ENCODE measurements at regions of chr2 and their contacts with region 1.

Region 1: GRCh38 chr2:121076885-121077549 is 208.0 kb downstream of the TFCP2L1 start:
- DNase-seq: peak; percentile 68 to 86
- H3K4me3 ChIP-seq: peak overlapping the region; percentile 27; the same call in 1 of the 2 replicates
- H3K27ac ChIP-seq: no peak overlapping the region
- H3K4me1 ChIP-seq: peaks cover 16% of the 10 kb centered on the region; the same call in 1 of the 2 replicates
- H3K27me3 ChIP-seq: 0 out of 2 replicates have a peak, but pooled peaks cover 5% of the 10 kb centered on the region
- CTCF ChIP-seq: peak; percentile 100

Region 2: DNA sequence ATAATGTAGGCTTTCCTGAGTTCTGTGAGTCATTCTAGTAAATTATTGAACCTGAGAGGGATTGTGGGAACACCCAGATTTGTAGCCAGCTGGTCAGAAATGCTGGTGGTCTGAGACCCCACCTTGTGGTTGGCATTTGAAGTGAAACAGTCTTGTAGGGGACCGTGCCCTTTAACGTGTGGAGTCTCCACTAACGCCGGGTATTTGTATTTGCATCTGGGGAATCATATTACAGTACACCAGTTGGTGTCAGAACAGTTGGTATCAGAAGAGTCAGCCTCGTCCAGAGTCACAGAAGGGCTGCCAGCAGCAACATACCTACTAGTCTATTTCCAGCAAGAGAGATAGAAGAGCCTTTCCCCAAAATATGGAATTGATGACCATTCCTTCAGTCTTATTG is 1355.6 kb before region 1 on chr2:
- CTCF ChIA-PET with region 1: no interaction called
- POLR2A ChIA-PET with region 1: interaction called, 13 read pairs
- intact Hi-C with region 1: no loop called
- DNase-seq: peak in 1 of 2 experiments; percentile 16
- H3K4me3 ChIP-seq: no peak overlapping the region
- H3K27ac ChIP-seq: no peak overlapping the region
- H3K4me1 ChIP-seq: peaks cover 4% of the 10 kb centered on the region; the same call in 1 of the 2 replicates
- H3K27me3 ChIP-seq: peaks cover 2% of the 10 kb centered on the region; the same call in 1 of the 2 replicates
- CTCF ChIP-seq: no peak

Region 3: GRCh38 chr2:120343433-120344105 is 733.4 kb before region 1 on chr2:
- CTCF ChIA-PET with region 1: no interaction called
- POLR2A ChIA-PET with region 1: no interaction called
- intact Hi-C with region 1: loop called (anchors 5 kb)
- DNase-seq: peak; percentile 80 to 87
- H3K4me3 ChIP-seq: peak overlapping the region; percentile 77; the same call in 1 of the 2 replicates
- H3K27ac ChIP-seq: no peak overlapping the region
- H3K4me1 ChIP-seq: peaks cover 21% of the 10 kb centered on the region
- H3K27me3 ChIP-seq: 0 out of 2 replicates have a peak, but pooled peaks cover 7% of the 10 kb centered on the region
- CTCF ChIP-seq: peak; percentile 96

Region 4: DNA sequence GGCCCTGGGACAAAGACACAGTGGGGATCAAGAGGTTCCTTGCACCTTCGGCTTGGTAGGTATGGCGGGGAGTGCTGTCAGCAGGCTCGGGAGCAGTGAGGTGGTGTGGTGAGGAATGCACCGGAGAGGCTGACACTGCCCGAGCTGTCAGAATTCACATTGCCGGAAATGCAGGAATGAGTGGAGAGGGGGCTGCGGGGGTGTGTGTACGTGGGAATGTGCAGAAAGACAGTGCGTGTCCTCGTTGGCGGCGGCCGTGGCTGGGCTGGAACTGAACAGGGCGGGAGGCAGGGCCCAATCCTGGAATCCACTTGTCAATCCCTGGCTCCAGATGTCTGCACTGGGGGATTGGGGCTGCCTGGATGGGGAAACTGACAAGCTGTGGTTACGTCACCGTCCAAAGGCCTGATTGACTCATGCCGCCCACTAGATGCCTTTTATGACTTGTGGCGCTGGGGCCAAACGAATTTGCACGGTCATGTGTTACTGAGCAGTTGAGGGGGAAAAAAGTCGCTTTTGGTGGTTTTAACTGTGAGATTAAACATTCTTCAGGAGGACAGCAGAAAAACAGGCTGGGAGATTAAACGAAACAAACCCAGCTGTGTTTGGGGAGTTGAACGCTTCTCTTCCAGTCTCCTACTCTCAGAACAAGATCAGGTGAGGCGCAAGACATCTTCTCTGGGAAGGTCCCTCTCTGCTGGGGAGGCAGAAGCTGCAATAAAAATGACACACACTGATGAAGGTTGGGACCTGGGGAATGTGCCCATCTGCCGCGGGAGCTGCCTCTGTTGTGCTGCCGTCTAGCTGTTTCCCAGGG is 530.8 kb before region 1 on chr2:
- CTCF ChIA-PET with region 1: no interaction called
- POLR2A ChIA-PET with region 1: no interaction called
- intact Hi-C with region 1: no loop called
- DNase-seq: no peak
- H3K4me3 ChIP-seq: no peak overlapping the region
- H3K27ac ChIP-seq: no peak overlapping the region
- H3K4me1 ChIP-seq: peaks cover 33% of the 10 kb centered on the region
- H3K27me3 ChIP-seq: no peaks in the 10 kb centered on the region
- CTCF ChIP-seq: no peak

Region 5: DNA sequence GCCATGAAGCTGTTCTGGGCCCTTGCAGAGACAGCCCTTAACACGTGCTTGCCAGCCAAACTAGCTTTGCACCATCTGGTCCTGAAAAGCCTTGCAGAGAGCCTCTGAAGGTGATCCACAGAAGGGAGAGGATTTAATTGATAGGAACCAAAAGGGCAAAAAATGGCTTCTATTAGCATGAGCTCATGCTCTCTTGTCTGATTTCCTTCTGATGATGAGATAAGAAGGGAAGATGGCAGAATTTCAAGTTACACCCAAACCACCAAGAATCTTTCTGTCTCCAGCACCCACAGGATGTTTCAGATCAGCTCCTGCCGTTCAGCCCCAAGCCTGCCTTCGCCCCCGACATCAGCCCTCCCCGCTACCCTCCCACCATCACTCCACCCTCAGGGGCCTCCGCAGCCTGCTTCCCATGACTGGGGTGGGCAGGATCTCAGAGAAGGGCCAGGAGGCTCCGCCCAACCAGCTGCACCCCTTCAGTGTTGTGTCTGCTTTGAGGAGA is 364.8 kb before region 1 on chr2:
- CTCF ChIA-PET with region 1: interaction called, 3 read pairs
- POLR2A ChIA-PET with region 1: interaction called, 23 read pairs
- intact Hi-C with region 1: no loop called
- DNase-seq: peak in 1 of 2 experiments; percentile 31
- H3K4me3 ChIP-seq: no peak overlapping the region
- H3K27ac ChIP-seq: no peak overlapping the region
- H3K4me1 ChIP-seq: no peaks in the 10 kb centered on the region
- H3K27me3 ChIP-seq: peaks cover 39% of the 10 kb centered on the region
- CTCF ChIP-seq: no peak

Region 6: DNA sequence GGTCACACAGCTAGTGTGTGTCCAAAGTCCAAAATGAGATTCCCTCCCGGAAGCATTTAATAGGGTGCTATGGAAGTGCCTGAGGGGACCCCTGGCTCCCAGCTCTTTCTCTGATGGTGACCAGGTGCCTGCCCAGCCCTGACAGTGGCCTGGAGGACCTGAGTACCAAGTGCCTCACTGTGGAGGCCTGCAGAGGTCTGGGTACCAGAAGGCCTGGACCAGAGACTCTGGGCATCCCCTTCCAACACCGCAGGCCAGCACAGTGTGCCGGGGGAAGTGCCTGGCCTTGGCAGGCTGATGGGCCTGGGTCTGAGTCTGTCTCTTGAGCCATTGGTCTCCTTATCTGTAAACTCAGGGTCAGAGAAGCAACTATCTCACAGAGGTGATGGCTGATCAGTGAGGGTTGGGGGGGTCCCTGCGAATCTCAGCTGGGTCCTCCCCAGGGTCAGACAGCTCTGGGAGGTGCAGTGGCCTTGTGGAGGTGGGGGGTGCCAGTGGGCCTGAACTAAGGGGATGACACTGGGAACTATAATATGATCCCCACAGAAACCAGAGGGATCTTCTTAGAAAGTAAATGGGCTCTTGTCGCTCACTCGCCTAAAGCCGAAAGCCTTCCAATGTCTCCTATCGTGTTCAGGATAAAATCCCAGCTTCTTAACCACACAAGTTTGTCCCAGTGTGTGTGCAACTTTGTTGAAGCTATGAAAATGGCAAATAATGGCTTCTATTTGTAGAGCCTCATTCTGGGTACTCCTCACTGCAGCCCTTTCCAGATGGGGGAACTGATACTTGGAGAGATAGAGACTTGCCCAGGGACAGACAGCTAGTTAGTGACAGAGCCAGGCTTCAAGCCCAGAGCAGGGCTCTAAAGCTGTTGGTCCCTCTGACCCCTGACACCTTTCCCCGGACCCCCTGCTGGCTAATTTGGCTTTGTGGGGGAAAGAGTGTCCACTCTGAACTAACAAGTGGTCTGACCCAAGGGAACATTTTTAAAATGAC is 17.1 kb before region 1 on chr2:
- CTCF ChIA-PET with region 1: interaction called, 15 read pairs
- POLR2A ChIA-PET with region 1: no interaction called
- intact Hi-C with region 1: no loop called
- DNase-seq: no peak
- H3K4me3 ChIP-seq: no peak overlapping the region
- H3K27ac ChIP-seq: no peak overlapping the region
- H3K4me1 ChIP-seq: no peaks in the 10 kb centered on the region
- H3K27me3 ChIP-seq: peaks cover 66% of the 10 kb centered on the region
- CTCF ChIP-seq: no peak

Region 7: GRCh38 chr2:121471532-121472469 is 394.8 kb after region 1 on chr2:
- CTCF ChIA-PET with region 1: no interaction called
- POLR2A ChIA-PET with region 1: no interaction called
- intact Hi-C with region 1: no loop called
- DNase-seq: no peak
- H3K4me3 ChIP-seq: no peak overlapping the region
- H3K27ac ChIP-seq: no peak overlapping the region
- H3K4me1 ChIP-seq: peaks cover 13% of the 10 kb centered on the region; the same call in 1 of the 2 replicates
- H3K27me3 ChIP-seq: no peaks in the 10 kb centered on the region
- CTCF ChIP-seq: no peak

Region 8: GRCh38 chr2:121489284-121489683 is 412.3 kb after region 1 on chr2:
- CTCF ChIA-PET with region 1: no interaction called
- POLR2A ChIA-PET with region 1: interaction called, 20 read pairs
- intact Hi-C with region 1: no loop called
- DNase-seq: peak; percentile 19 to 79
- H3K4me3 ChIP-seq: no peak overlapping the region; the same call in 1 of the 2 replicates
- H3K27ac ChIP-seq: no peak overlapping the region
- H3K4me1 ChIP-seq: peaks cover 42% of the 10 kb centered on the region
- H3K27me3 ChIP-seq: no peaks in the 10 kb centered on the region
- CTCF ChIP-seq: no peak

Region 9: GRCh38 chr2:121649596-121650314 is 572.7 kb after region 1 on chr2:
- CTCF ChIA-PET with region 1: interaction called, 13 read pairs
- POLR2A ChIA-PET with region 1: no interaction called
- intact Hi-C with region 1: no loop called
- DNase-seq: peak; percentile 95 to 96
- H3K4me3 ChIP-seq: peak overlapping the region; percentile 69
- H3K27ac ChIP-seq: peak overlapping the region; percentile 81
- H3K4me1 ChIP-seq: peaks cover 23% of the 10 kb centered on the region
- H3K27me3 ChIP-seq: no peaks in the 10 kb centered on the region
- CTCF ChIP-seq: no peak

Measured in PC-9 (cell line).